Calu3 (cell line): ENCODE measurements at regions of chr22 and their contacts with region 1.

Region 1: DNA sequence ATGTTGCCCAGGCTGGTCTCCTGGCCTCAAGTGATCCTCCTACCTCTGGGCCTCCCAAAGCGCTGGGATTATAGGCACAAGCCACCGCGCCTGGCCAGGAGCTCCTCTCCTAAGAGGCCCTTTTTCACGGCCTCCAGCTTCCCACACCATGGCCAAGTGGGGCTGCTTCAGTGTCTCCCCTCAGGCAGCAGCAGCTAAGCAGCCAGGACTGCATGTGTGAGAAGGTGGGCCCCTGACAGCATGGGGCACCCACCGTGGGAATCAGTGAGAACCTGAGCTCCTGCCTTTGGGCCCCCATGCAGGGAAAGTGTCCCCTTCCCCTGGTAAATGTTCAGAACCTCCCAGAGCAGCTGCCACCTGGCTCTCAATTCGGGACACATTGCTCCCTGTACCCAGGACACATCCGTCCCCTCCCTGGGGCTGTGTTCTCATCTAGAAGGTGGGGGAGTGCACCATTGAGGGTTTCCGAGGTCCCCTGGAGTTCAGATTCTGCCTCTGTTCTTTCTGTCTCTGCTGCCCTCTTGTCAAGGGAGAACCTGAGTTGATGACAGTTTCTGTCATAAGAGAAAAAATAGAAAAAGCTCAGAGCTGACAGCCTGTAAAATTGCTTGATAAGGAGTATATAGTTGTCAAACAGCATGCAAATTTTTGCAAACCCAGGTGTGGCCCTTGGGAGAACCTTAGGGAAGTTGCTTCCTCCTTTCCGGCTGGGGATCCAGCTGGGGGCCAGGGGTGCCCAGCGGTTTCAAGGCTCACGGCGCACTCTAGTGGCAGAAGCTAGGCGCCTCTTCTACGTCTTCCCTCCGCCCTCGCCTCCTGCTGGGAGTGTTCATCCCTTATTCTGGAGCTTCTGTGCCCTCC is 29.7 kb downstream of the FAM83F start:
- DNase-seq: peak; percentile 82
- H3K4me3 Mint-ChIP-seq: no peak overlapping the region
- H3K27ac Mint-ChIP-seq: no peak overlapping the region
- H3K4me1 Mint-ChIP-seq: no peaks in the 10 kb centered on the region
- H3K27me3 Mint-ChIP-seq: no peaks in the 10 kb centered on the region
- CTCF ChIP-seq: peak; percentile 78

Region 2: GRCh38 chr22:39478441-39479264 is 545.8 kb before region 1 on chr22:
- CTCF ChIA-PET with region 1: no interaction called
- intact Hi-C with region 1: no loop called
- DNase-seq: peak; percentile 52
- H3K4me3 Mint-ChIP-seq: no peak overlapping the region
- H3K27ac Mint-ChIP-seq: no peak overlapping the region
- H3K4me1 Mint-ChIP-seq: peaks cover 15% of the 10 kb centered on the region
- H3K27me3 Mint-ChIP-seq: no peaks in the 10 kb centered on the region
- CTCF ChIP-seq: no peak

Region 3: GRCh38 chr22:39932918-39933649 is 91.3 kb before region 1 on chr22:
- CTCF ChIA-PET with region 1: interaction called, 5 read pairs
- intact Hi-C with region 1: loop called (anchors 1 kb)
- DNase-seq: peak; percentile 58
- H3K4me3 Mint-ChIP-seq: no peak overlapping the region
- H3K27ac Mint-ChIP-seq: no peak overlapping the region
- H3K4me1 Mint-ChIP-seq: no peaks in the 10 kb centered on the region
- H3K27me3 Mint-ChIP-seq: peaks cover 57% of the 10 kb centered on the region
- CTCF ChIP-seq: peak; percentile 83

Region 4: GRCh38 chr22:40036591-40037225 is 12.3 kb after region 1 on chr22:
- CTCF ChIA-PET with region 1: interaction called, 12 read pairs
- intact Hi-C with region 1: no loop called
- DNase-seq: peak; percentile 68
- H3K4me3 Mint-ChIP-seq: no peak overlapping the region
- H3K27ac Mint-ChIP-seq: no peak overlapping the region
- H3K4me1 Mint-ChIP-seq: no peaks in the 10 kb centered on the region
- H3K27me3 Mint-ChIP-seq: peaks cover 16% of the 10 kb centered on the region
- CTCF ChIP-seq: peak; percentile 77